ENCODE measurements at regions of chr11 and their contacts with region 1.

Region 1: DNA sequence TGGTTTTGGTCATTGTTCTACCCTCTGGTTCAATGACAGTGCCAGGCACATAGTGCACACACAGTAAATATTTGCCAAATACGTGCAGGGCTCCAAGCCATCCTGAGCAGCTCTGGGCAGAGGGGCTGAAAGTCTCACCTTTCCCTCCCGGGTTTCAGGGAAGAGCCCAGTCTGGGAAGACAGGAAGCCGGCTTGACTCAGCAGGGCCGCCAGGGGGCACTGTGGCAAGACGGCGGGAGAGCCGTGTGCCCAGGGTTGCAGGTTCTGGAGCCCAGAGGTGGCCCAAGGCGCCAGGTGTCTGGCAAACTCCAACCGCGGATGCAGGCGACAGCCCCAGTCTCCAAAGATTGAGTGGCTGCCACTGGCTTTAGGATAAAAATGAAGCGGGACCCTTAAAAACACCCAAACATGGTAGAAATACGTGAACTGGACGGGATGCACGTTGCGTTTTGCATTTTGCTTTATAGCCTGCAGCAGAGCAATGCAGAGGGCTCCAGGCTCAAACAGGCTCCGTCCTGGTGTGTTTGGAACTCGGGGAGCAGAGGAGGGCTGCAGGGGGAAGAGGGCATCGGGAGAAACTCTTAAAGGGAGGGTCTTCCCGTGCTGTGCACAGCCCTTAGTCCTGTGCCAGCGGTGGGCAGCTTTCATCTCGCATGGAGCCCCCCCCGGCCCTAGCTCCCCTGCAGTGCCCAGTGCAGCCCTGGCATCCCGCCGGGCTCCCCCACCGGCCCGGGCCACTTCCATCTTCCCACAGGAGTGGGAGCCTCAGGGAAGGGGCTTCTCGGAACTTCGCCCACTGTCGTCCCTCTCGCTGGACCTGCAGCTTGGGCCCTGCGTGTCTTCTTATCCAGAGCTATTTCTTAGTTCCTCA is 10.7 kb downstream of the KRTAP5-5 start:
- DNase-seq: no peak
- ATAC-seq: peak; percentile 94
- H3K4me3 ChIP-seq: no peak overlapping the region
- H3K27ac ChIP-seq: no peak overlapping the region
- H3K4me1 ChIP-seq: peaks cover 0 to 9% of the 10 kb centered on the region in 2 experiments; a peak in 1 of 4 replicates
- H3K27me3 ChIP-seq: no peaks in the 10 kb centered on the region
- CTCF ChIP-seq: peak; percentile 63 to 94 (median 90)
- POLR2A ChIP-seq: no peak
- RAD21 ChIP-seq: peak; percentile 46

Region 2: DNA sequence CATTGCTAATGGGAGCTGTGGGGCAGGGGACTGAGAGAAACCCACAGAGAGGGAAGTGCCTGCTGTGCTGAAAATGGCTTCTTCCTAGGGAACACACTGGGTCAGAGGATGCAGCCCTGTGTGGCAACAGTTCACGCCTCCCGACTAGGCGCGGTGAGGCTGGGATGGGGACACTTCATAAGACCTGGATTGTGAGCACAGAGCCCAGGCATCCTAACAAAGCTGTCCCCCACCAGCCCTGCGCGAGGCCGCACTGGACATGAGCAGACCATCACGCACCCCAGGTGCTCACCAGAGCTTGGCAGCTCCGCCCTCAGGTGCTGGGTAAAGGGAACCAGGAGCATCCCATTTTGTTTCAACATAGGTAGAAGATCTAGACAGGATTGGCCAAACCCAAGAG is 16.6 kb before region 1 on chr11:
- CTCF ChIA-PET with region 1: no interaction called
- POLR2A ChIA-PET with region 1: no interaction called
- RAD21 ChIA-PET with region 1: no interaction called
- intact Hi-C with region 1: loop called (anchors 2 kb)
- DNase-seq: no peak
- ATAC-seq: no peak
- H3K4me3 ChIP-seq: no peak overlapping the region
- H3K27ac ChIP-seq: no peak overlapping the region
- H3K4me1 ChIP-seq: peaks cover 0 to 3% of the 10 kb centered on the region in 2 experiments; a peak in 1 of 4 replicates
- H3K27me3 ChIP-seq: no peaks in the 10 kb centered on the region
- CTCF ChIP-seq: no peak
- POLR2A ChIP-seq: no peak
- RAD21 ChIP-seq: no peak